K562 (cell line): ENCODE measurements at regions of chr6 and their contacts with region 1.

Region 1: DNA sequence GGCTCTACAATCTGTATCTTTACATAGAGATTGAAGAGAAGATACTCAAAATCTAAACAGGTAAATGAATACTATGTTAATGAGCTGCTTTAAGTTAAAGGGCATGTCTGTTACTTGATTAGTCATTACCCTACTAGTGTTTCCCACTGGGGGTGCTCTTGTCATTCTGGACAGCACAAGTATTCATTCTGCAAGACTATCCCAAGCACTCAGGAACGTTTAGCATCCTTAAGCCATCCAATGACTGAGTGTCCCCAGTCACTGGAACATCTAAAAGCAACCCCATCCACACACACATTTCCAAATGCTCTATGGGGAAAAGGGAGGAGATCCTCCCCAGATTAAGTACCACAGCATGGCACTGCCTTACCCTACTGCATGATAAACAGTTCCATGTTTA is 25.7 kb downstream of the EZR start:
- DNase-seq: peak; percentile 55 to 81 (median 66)
- ATAC-seq: peak; percentile 96
- H3K4me3 ChIP-seq: no peak overlapping the region
- H3K27ac ChIP-seq: no peak overlapping the region
- H3K4me1 ChIP-seq: no peaks in the 10 kb centered on the region
- H3K27me3 ChIP-seq: no peaks in the 10 kb centered on the region
- CTCF ChIP-seq: peak; percentile 71 to 92 (median 84)
- EP300 ChIP-seq: 0 out of 2 replicates have a peak, but pooled peaks have one; percentile 9
- POLR2A ChIP-seq: no peak
- RAD21 ChIP-seq: peak; percentile 84 to 96

Region 2: GRCh38 chr6:158040051-158040803 is 753.2 kb before region 1 on chr6:
- CTCF ChIA-PET with region 1: no interaction called
- POLR2A ChIA-PET with region 1: no interaction called
- in situ Hi-C with region 1: no loop called
- intact Hi-C with region 1: no loop called
- DNase-seq: peak; percentile 89 to 95 (median 94)
- ATAC-seq: peak; percentile 76
- H3K4me3 ChIP-seq: no peak overlapping the region
- H3K27ac ChIP-seq: peak overlapping the region; percentile 80
- H3K4me1 ChIP-seq: peaks cover 46 to 60% of the 10 kb centered on the region in 2 experiments
- H3K27me3 ChIP-seq: no peaks in the 10 kb centered on the region
- CTCF ChIP-seq: peak in 1 of 3 experiments; percentile 5; a peak in 1 of 6 replicates
- EP300 ChIP-seq: peak; percentile 97
- POLR2A ChIP-seq: no peak
- RAD21 ChIP-seq: peak; percentile 18 to 19; a peak in 2 of 4 replicates

Region 3: GRCh38 chr6:158718461-158719046 is 74.9 kb before region 1 on chr6:
- CTCF ChIA-PET with region 1: interaction called, 3 read pairs
- POLR2A ChIA-PET with region 1: no interaction called
- in situ Hi-C with region 1: no loop called
- intact Hi-C with region 1: loop called (anchors 2 kb)
- DNase-seq: peak; percentile 66 to 77 (median 67)
- ATAC-seq: peak; percentile 90
- H3K4me3 ChIP-seq: no peak overlapping the region
- H3K27ac ChIP-seq: no peak overlapping the region
- H3K4me1 ChIP-seq: peaks cover 6 to 13% of the 10 kb centered on the region in 2 experiments; a peak in 4 of 5 replicates
- H3K27me3 ChIP-seq: peaks cover 3 to 16% of the 10 kb centered on the region in 2 experiments; a peak in 3 of 5 replicates
- CTCF ChIP-seq: peak; percentile 91 to 98 (median 97)
- EP300 ChIP-seq: no peak
- POLR2A ChIP-seq: no peak
- RAD21 ChIP-seq: peak; percentile 67 to 88

Region 4: GRCh38 chr6:158808941-158809678 is 15.7 kb after region 1 on chr6:
- CTCF ChIA-PET with region 1: no interaction called
- POLR2A ChIA-PET with region 1: interaction called, 13 read pairs
- in situ Hi-C with region 1: no loop called
- intact Hi-C with region 1: no loop called
- DNase-seq: no peak
- ATAC-seq: no peak
- H3K4me3 ChIP-seq: no peak overlapping the region
- H3K27ac ChIP-seq: no peak overlapping the region
- H3K4me1 ChIP-seq: peaks cover 9 to 42% of the 10 kb centered on the region in 2 experiments; a peak in 4 of 5 replicates
- H3K27me3 ChIP-seq: no peaks in the 10 kb centered on the region
- CTCF ChIP-seq: no peak
- EP300 ChIP-seq: no peak
- POLR2A ChIP-seq: no peak
- RAD21 ChIP-seq: no peak

Region 5: GRCh38 chr6:158817728-158818494 is 24.5 kb after region 1 on chr6:
- CTCF ChIA-PET with region 1: interaction called, 3 read pairs
- POLR2A ChIA-PET with region 1: no interaction called
- in situ Hi-C with region 1: no loop called
- intact Hi-C with region 1: loop called (anchors 1 kb)
- DNase-seq: peak; percentile 85 to 91 (median 87)
- ATAC-seq: peak; percentile 76
- H3K4me3 ChIP-seq: peak overlapping the region; percentile 76
- H3K27ac ChIP-seq: peak overlapping the region; percentile 87
- H3K4me1 ChIP-seq: peaks cover 42 to 48% of the 10 kb centered on the region in 2 experiments
- H3K27me3 ChIP-seq: no peaks in the 10 kb centered on the region
- CTCF ChIP-seq: no peak
- EP300 ChIP-seq: no peak
- POLR2A ChIP-seq: peak; percentile 56
- RAD21 ChIP-seq: 0 out of 4 replicates have a peak, but pooled peaks of 1 of the 2 experiments have one; percentile 8

Region 6: GRCh38 chr6:158958504-158959386 is 165.3 kb after region 1 on chr6:
- CTCF ChIA-PET with region 1: interaction called, 5 read pairs
- POLR2A ChIA-PET with region 1: no interaction called
- in situ Hi-C with region 1: no loop called
- intact Hi-C with region 1: loop called (anchors 5 kb)
- DNase-seq: no peak
- ATAC-seq: peak; percentile 66
- H3K4me3 ChIP-seq: no peak overlapping the region
- H3K27ac ChIP-seq: no peak overlapping the region
- H3K4me1 ChIP-seq: peaks cover 6 to 9% of the 10 kb centered on the region in 2 experiments; a peak in 4 of 5 replicates
- H3K27me3 ChIP-seq: no peaks in the 10 kb centered on the region
- CTCF ChIP-seq: peak; percentile 38 to 51 (median 42); a peak in 5 of 6 replicates
- EP300 ChIP-seq: no peak
- POLR2A ChIP-seq: no peak
- RAD21 ChIP-seq: peak; percentile 40 to 61; a peak in 3 of 4 replicates

Region 7: DNA sequence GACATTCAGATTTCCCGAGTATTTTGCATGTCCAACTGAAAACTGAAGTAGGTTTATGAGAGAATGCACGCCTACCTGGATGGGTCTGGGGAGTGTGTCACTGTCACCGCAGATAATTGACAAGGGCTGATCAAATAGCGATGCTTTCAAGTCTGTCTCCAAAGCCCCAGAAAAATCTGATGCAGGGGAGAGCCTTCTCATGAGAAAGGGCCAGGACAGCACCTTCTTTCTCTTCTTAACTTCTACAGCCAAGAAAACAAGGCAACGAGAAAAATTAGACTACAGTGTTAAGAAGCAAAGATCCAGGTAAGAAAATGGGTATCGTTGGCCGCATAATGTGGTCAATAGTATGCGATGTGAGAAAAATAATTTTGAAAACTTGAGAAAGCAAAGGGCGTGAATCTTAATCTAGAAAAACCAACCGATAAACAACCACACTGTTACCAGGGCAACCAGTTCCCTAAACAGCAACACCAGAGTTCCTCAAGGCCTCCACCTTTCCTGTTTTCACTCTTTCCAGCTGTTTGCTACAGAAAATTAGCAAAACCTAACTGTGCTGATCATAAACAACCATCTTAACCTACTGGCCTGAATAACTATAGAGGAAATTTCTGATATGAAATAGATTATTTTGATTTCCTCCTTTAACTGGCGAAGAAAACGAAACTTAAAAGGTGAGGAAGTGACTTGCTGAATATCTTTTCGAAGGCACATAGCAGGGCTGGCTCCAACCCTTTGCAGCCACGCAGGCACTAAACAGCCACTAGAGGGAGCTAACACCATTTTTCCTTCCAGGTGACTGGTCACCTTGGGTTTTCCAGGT is 248.8 kb after region 1 on chr6:
- CTCF ChIA-PET with region 1: no interaction called
- POLR2A ChIA-PET with region 1: no interaction called
- in situ Hi-C with region 1: no loop called
- intact Hi-C with region 1: no loop called
- DNase-seq: peak; percentile 76 to 86 (median 82)
- ATAC-seq: peak; percentile 97
- H3K4me3 ChIP-seq: no peak overlapping the region
- H3K27ac ChIP-seq: no peak overlapping the region
- H3K4me1 ChIP-seq: no peaks in the 10 kb centered on the region
- H3K27me3 ChIP-seq: peaks cover 53 to 59% of the 10 kb centered on the region in 2 experiments
- CTCF ChIP-seq: peak; percentile 90 to 98 (median 97)
- EP300 ChIP-seq: no peak
- POLR2A ChIP-seq: no peak
- RAD21 ChIP-seq: peak; percentile 76 to 87

Region 8: DNA sequence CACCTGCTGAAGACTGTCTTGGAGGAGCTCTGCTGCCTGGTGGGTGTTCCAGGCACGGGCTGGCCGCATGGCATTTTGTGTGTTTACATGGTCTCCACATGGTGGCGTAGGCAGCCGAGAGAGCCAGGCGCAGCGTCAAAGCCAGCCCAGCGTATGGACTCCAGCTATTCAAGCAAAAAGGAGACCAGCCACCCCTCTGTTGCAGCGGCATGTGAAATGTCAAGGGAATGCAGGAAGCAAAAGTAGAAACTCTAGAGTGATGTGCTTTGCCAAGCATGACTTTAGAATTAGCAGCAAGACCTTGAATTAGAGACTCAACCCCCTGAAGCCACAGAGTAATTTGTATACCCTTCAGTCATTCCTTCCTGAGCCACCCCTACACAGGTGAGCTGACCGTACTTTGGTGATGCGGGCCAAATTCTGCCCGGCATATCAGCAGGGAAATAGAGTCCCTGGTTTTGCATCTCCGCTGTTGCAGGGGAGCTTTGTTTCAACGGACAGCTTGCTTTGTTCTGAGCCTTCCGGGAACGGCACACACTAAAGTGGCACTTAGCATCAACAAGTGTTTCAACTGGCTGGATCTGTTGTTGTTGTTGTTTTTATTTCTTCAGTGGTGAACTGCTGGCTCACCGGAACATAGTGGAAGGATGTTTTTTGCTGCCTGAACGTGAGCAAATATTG is 424.3 kb after region 1 on chr6:
- CTCF ChIA-PET with region 1: no interaction called
- POLR2A ChIA-PET with region 1: no interaction called
- in situ Hi-C with region 1: no loop called
- intact Hi-C with region 1: no loop called
- DNase-seq: peak; percentile 47 to 56 (median 52)
- ATAC-seq: peak; percentile 96
- H3K4me3 ChIP-seq: no peak overlapping the region
- H3K27ac ChIP-seq: no peak overlapping the region
- H3K4me1 ChIP-seq: no peaks in the 10 kb centered on the region
- H3K27me3 ChIP-seq: peaks cover 27 to 62% of the 10 kb centered on the region in 2 experiments
- CTCF ChIP-seq: peak; percentile 51 to 72 (median 61)
- EP300 ChIP-seq: no peak
- POLR2A ChIP-seq: no peak
- RAD21 ChIP-seq: peak in 1 of 2 experiments; percentile 52; a peak in 2 of 4 replicates